A549 (cell line): ENCODE measurements at regions of chr17 and their contacts with region 1.

Region 1: DNA sequence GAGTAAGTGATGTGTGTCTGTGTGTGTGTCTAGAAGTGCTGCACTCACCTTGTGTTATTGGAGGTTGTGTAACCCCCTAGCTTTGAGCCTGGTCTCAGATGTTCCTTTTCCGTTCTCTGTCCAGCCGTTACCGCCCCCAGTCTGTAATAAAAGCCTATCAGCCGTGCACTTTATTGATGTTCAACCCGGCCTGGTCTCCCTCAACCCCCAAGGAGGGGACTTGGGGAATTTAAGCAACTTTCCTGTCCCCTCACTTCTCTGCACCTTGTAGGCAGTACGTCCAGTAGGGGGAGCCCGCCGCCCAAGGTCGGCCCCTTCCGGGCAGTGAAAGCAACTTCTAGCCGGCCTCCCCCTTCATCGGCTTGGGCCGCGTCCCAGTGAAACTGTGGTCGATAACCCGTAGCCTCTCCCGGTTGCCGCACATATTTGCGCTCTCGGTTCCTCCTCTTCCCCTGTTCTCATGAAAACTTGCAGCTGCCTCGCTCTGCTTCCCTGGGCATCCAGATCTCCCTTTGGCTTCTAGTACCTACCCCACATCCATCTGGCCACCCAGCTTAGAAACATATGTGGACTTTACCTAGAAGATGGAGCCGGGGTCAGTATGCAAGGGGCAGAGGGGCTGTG is 7.9 kb downstream of the PNPO start:
- DNase-seq: peak; percentile 80 to 85
- ATAC-seq: peak; percentile 71 to 88
- H3K4me3 ChIP-seq: peak overlapping the region; percentile 5; the same call in 1 of the 3 replicates
- H3K27ac ChIP-seq: peak overlapping the region; percentile 77 to 87
- H3K4me1 ChIP-seq: peaks cover 48% of the 10 kb centered on the region
- CTCF ChIP-seq: peak; percentile 99
- EP300 ChIP-seq: no peak
- POLR2A ChIP-seq: no peak
- RAD21 ChIP-seq: peak; percentile 96 to 97

Region 2: GRCh38 chr17:47720754-47721533 is 228.3 kb before region 1 on chr17:
- CTCF ChIA-PET with region 1: no interaction called
- POLR2A ChIA-PET with region 1: no interaction called
- DNase-seq: no peak
- ATAC-seq: peak in 1 of 2 experiments; percentile 8; a peak in 2 of 6 replicates
- H3K4me3 ChIP-seq: no peak overlapping the region
- H3K27ac ChIP-seq: peak overlapping the region in 1 of 2 experiments; percentile 29; a peak in 2 of 6 replicates
- H3K4me1 ChIP-seq: peaks cover 13% of the 10 kb centered on the region
- CTCF ChIP-seq: no peak
- EP300 ChIP-seq: no peak
- POLR2A ChIP-seq: no peak
- RAD21 ChIP-seq: no peak

Region 3: GRCh38 chr17:47889734-47890529 is 59.3 kb before region 1 on chr17:
- CTCF ChIA-PET with region 1: interaction called, 46 read pairs
- POLR2A ChIA-PET with region 1: no interaction called
- DNase-seq: peak; percentile 85 to 90
- ATAC-seq: peak; percentile 95 to 98
- H3K4me3 ChIP-seq: no peak overlapping the region
- H3K27ac ChIP-seq: no peak overlapping the region
- H3K4me1 ChIP-seq: peaks cover 23% of the 10 kb centered on the region; the same call in 2 of the 3 replicates
- CTCF ChIP-seq: peak; percentile 99
- EP300 ChIP-seq: no peak
- POLR2A ChIP-seq: no peak
- RAD21 ChIP-seq: peak; percentile 100

Region 4: DNA sequence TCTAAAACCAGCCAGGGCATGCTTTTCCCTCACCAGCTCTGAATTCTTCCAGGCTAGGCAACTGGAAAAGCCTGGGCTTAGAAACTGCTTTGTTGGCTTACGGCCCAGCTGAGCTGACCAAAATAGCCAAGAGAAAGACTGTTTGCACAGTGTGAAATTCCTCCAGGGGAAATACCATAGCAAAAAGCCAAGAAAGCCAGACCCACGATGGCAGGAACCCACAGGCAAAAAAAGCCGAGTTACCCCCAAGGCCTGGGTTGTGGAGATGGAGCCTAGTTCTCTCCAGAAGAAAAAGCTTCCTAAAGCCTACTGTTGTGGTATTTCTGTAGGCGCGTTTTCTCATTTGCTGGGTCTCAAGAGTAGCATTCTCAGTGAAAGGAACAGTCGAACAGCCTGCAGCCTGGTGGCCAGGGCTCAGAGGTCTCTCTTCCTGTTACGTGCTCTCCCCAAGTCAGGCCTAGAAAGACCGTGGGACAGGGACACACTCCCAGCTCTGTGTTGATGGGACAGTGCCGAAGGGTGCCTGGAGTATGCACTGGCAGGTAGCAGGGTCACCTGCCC is 43.9 kb before region 1 on chr17:
- CTCF ChIA-PET with region 1: interaction called, 18 read pairs
- POLR2A ChIA-PET with region 1: no interaction called
- DNase-seq: no peak
- ATAC-seq: peak; percentile 49 to 61; a peak in 4 of 6 replicates
- H3K4me3 ChIP-seq: no peak overlapping the region
- H3K27ac ChIP-seq: peak overlapping the region in 1 of 2 experiments; percentile 24; a peak in 3 of 6 replicates
- H3K4me1 ChIP-seq: peaks cover 13% of the 10 kb centered on the region
- CTCF ChIP-seq: no peak
- EP300 ChIP-seq: no peak
- POLR2A ChIP-seq: no peak
- RAD21 ChIP-seq: no peak

Region 5: DNA sequence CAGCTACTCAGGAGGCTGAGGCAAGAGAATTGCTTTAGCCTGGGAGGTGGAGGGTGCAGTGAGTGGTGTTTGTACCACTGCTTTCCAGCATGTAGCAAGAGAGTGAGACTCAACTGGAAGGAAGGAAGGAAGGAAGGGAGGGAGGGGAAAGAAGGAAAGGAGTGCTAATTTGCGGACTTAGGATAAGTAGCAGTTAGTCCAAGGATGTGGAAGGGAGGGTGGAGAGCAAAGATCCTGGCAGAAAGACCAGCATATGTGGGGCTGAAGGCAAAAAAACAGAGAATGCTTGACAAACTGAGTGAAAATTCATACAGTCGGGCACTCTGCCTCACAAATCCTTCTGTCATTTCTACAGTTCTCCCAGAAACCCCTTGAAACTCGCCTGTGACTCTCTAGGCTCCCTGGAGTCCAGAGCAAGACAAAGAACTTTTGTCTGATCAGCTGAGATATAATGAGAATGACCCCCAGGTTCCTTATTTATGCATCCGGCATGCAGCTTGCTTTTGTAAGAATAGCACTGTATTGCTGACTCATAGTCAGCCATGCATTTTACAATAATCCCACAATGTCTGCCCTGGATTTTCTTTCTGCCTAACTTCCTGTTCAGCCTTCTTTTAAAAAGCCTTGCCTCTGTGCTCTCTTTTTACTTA is 53.1 kb after region 1 on chr17:
- CTCF ChIA-PET with region 1: interaction called, 23 read pairs
- POLR2A ChIA-PET with region 1: no interaction called
- DNase-seq: peak; percentile 36 to 56
- ATAC-seq: peak in 1 of 2 experiments; percentile 64; a peak in 3 of 6 replicates
- H3K4me3 ChIP-seq: no peak overlapping the region
- H3K27ac ChIP-seq: peak overlapping the region; percentile 75 to 84
- H3K4me1 ChIP-seq: peaks cover 16% of the 10 kb centered on the region
- CTCF ChIP-seq: no peak
- EP300 ChIP-seq: no peak
- POLR2A ChIP-seq: no peak
- RAD21 ChIP-seq: no peak